PC-9 (cell line): ENCODE measurements at regions of chr9 and their contacts with region 1.

Region 1: GRCh38 chr9:69056191-69056815 is 20.8 kb downstream of the FXN start:
- DNase-seq: no peak
- H3K4me3 ChIP-seq: no peak overlapping the region
- H3K27ac ChIP-seq: no peak overlapping the region
- H3K4me1 ChIP-seq: no peaks in the 10 kb centered on the region
- H3K27me3 ChIP-seq: no peaks in the 10 kb centered on the region
- CTCF ChIP-seq: no peak

Region 2: GRCh38 chr9:68996462-68996861 is 59.8 kb before region 1 on chr9:
- CTCF ChIA-PET with region 1: no interaction called
- POLR2A ChIA-PET with region 1: no interaction called
- intact Hi-C with region 1: no loop called
- DNase-seq: no peak
- H3K4me3 ChIP-seq: no peak overlapping the region
- H3K27ac ChIP-seq: no peak overlapping the region
- H3K4me1 ChIP-seq: no peaks in the 10 kb centered on the region
- H3K27me3 ChIP-seq: peaks cover 77% of the 10 kb centered on the region
- CTCF ChIP-seq: no peak

Region 3: GRCh38 chr9:69104830-69105527 is 48.7 kb after region 1 on chr9:
- CTCF ChIA-PET with region 1: no interaction called
- POLR2A ChIA-PET with region 1: no interaction called
- intact Hi-C with region 1: no loop called
- DNase-seq: peak; percentile 93 to 97
- H3K4me3 ChIP-seq: peak overlapping the region; percentile 25; the same call in 1 of the 2 replicates
- H3K27ac ChIP-seq: peak overlapping the region; percentile 65
- H3K4me1 ChIP-seq: peaks cover 38% of the 10 kb centered on the region
- H3K27me3 ChIP-seq: no peaks in the 10 kb centered on the region
- CTCF ChIP-seq: no peak

Region 4: GRCh38 chr9:69174616-69175463 is 118.5 kb after region 1 on chr9:
- CTCF ChIA-PET with region 1: no interaction called
- POLR2A ChIA-PET with region 1: no interaction called
- intact Hi-C with region 1: loop called (anchors 5 kb)
- DNase-seq: peak; percentile 65 to 89
- H3K4me3 ChIP-seq: peak overlapping the region; percentile 70
- H3K27ac ChIP-seq: peak overlapping the region; percentile 97
- H3K4me1 ChIP-seq: peaks cover 89% of the 10 kb centered on the region
- H3K27me3 ChIP-seq: no peaks in the 10 kb centered on the region
- CTCF ChIP-seq: no peak

Region 5: DNA sequence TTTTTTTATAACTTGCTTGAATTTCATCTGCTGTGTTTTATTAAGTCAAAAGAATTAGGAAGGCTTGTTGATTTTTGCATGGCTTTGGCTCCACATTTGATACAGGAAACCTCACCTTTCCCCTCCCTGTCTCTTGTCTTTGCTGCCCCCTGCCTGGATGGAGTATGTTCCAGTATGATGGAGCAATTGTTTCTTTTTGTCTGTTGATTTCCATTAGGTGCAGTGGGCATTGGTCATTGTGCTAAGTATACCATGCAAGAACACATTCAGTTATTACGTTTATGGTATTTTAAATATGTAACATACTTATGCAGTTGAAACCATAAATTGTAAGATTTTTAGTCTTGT is 137.4 kb after region 1 on chr9:
- CTCF ChIA-PET with region 1: interaction called, 14 read pairs
- POLR2A ChIA-PET with region 1: no interaction called
- intact Hi-C with region 1: loop called (anchors 1 kb)
- DNase-seq: no peak
- H3K4me3 ChIP-seq: no peak overlapping the region
- H3K27ac ChIP-seq: no peak overlapping the region
- H3K4me1 ChIP-seq: peaks cover 38% of the 10 kb centered on the region; the same call in 1 of the 2 replicates
- H3K27me3 ChIP-seq: no peaks in the 10 kb centered on the region
- CTCF ChIP-seq: no peak

Region 6: GRCh38 chr9:69397384-69398214 is 341.3 kb after region 1 on chr9:
- CTCF ChIA-PET with region 1: no interaction called
- POLR2A ChIA-PET with region 1: no interaction called
- intact Hi-C with region 1: loop called (anchors 5 kb)
- DNase-seq: no peak
- H3K4me3 ChIP-seq: no peak overlapping the region
- H3K27ac ChIP-seq: no peak overlapping the region
- H3K4me1 ChIP-seq: peaks cover 14% of the 10 kb centered on the region; the same call in 1 of the 2 replicates
- H3K27me3 ChIP-seq: no peaks in the 10 kb centered on the region
- CTCF ChIP-seq: no peak